ENCODE measurements at regions of chr20 and their contacts with region 1.

Region 1: DNA sequence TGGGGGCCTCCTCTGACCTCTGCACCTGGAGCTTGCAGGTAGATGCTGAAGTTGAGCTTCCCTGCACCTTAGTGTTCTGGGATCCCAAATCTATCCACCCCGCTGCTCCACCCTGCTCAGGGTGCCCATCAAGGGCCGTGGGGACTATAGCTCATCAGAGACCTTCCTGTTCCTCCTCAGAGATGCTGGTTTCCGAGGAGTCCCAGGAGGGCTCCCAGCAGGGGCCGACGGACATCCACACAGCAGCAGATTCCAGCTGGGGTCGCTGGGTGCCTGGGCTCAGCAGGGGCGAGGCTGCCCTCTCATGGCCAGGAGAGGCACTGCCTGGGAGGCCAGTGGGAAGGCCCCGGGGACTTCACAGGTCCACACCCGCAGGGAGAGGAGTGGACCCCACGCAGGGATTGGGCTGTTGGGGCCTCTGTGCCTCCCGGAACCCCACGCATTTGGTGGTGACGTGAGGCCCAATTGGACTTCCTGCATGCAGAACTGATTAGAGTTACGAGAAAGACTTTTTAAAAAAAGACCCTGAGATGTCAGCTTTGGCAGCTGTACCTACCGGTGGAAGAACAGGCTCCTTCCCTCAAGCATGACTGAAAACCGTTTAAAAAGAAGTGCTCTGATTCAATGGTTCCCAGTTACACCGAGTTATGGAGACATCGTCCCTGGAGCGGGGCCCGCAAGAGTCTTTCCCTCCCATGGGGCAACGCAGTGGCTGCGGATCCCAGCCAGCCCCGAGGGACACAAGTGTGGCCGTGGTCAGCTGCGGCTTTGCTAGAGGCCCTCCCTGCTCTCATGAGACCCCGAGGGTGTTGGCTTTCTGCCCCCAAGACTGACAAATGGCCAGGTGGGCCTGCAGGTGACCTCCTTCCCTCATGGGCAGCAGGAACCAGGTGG is 25.3 kb upstream of the SLCO4A1 start:
- ATAC-seq: peak; percentile 68 to 99 (median 94)
- H3K4me3 ChIP-seq: no peak overlapping the region
- H3K27ac ChIP-seq: no peak overlapping the region
- H3K4me1 ChIP-seq: peaks cover 4 to 8% of the 10 kb centered on the region in 2 donors

Region 2: DNA sequence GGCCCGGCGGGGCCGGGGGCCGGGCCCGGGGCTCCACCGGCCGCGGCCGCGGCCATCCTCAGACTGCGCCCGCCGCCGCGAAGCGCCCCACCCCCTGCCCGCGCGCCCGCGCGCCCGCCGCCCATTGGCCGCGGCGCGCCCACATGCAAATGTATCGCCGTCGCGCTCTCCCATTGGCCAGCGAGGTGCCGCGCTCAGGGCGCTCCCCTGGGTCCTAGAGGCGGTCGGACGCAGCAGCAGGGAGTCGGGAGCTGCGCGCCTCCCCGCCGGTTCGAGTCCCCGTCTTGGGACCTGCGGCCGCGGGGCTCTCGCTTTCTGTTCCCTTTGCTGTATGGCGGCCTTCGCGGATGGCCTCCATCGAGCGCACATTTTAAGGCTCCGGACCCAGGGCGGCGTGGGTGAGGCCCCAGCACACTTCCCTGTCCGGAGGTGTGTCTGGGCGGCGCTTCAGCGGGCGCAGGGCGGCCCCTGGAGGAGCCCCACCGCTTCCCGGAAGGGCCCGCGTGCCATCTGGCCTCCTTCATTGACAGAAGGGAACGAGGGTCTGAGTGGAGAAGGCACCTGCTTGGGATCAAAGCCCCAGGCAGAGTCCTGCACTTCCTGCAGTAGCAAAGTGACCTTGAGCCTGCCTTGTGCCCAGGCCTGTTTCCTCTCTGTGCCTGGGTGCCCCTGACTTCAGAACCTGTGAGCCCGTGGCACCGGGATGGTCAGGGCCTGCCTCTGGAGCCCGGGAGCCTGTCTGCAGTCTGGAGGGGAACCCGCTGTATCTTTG is 209.6 kb before region 1 on chr20 and contains the start of gene CABLES2:
- in situ Hi-C with region 1: loop called in 3 of 9 experiments (anchors 10 to 25 kb)
- ATAC-seq: peak; percentile 81 to 93 (median 86)
- H3K4me3 ChIP-seq: peak within 1 kb of the TSS; percentile 67 to 97 (median 74)
- H3K27ac ChIP-seq: peak within 1 kb of the TSS; percentile 21 to 47
- H3K4me1 ChIP-seq: peaks cover 20 to 23% of the 10 kb centered on the region in 2 donors
- total RNA-seq, gene CABLES2: 1.4 to 9.6 (median 5.7) TPM

Region 3: DNA sequence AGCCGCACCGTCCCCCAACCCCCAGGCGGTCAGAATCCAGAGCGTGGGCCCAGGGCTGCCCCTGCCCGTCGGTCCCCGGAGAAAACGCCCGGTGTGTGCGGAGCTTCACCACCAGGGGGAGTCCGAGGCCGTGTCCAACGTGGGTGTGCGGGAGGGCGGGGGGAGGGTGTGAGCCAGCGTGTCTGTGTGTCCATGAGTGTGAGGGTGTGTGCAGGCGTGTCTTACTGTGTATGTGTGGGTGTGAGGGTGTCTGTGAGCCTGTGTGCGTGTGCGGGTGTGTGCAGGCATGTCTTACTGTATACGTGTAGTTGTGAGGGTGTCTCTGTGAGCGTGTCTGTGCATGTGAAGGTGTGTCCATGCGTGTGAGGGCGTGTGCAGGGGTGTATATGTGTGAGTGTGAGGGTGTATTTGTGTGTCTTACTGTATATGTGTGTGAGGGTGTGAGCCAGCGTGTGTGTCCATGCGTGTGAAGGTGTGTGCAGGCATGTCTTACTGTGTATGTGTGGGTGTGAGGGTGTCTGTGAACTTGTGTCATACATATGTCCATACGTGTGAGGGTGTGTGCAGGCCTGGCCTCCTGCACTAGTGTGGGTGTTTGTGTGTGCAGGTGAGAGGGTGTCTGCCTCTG is 116.6 kb before region 1 on chr20:
- in situ Hi-C with region 1: loop called in 6 of 9 experiments (anchors 10 to 25 kb)
- ATAC-seq: peak; percentile 40 to 87 (median 52)
- H3K4me3 ChIP-seq: no peak overlapping the region
- H3K27ac ChIP-seq: no peak overlapping the region
- H3K4me1 ChIP-seq: peaks cover 31 to 42% of the 10 kb centered on the region in 2 donors